ENCODE measurements at regions of chr1 and their contacts with region 1.

Region 1: GRCh38 chr1:40257688-40258444 is at the start of gene ZMPSTE24:
- DNase-seq: peak; percentile 95
- H3K4me3 ChIP-seq: peak within 1 kb of the TSS; percentile 59 to 91 (median 89)
- H3K27ac ChIP-seq: peak within 1 kb of the TSS; percentile 86
- H3K4me1 ChIP-seq: peaks cover 9% of the 10 kb centered on the region
- H3K27me3 ChIP-seq: no peaks in the 10 kb centered on the region
- CTCF ChIP-seq: no peak
- POLR2A ChIP-seq: peak; percentile 88
- total RNA-seq, gene ZMPSTE24: 42.5 and 44.7 TPM in 2 replicates

Region 2: GRCh38 chr1:40040511-40041465 is 217.1 kb before region 1 on chr1 and contains the start of gene CAP1:
- CTCF ChIA-PET with region 1: no interaction called
- POLR2A ChIA-PET with region 1: no interaction called
- dilution Hi-C with region 1: no loop called
- intact Hi-C with region 1: loop called (anchors 5 kb)
- DNase-seq: peak; percentile 97
- H3K4me3 ChIP-seq: peak within 1 kb of the TSS; percentile 76 to 92 (median 90)
- H3K27ac ChIP-seq: peak within 1 kb of the TSS; percentile 83
- H3K4me1 ChIP-seq: peaks cover 39% of the 10 kb centered on the region
- H3K27me3 ChIP-seq: no peaks in the 10 kb centered on the region
- CTCF ChIP-seq: no peak
- POLR2A ChIP-seq: peak; percentile 83
- total RNA-seq, gene CAP1: 415 and 427 TPM in 2 replicates

Region 3: GRCh38 chr1:40078512-40079333 is 179.1 kb before region 1 on chr1:
- CTCF ChIA-PET with region 1: no interaction called
- POLR2A ChIA-PET with region 1: no interaction called
- dilution Hi-C with region 1: no loop called
- intact Hi-C with region 1: loop called (anchors 1 kb)
- DNase-seq: peak; percentile 60
- H3K4me3 ChIP-seq: no peak overlapping the region
- H3K27ac ChIP-seq: no peak overlapping the region
- H3K4me1 ChIP-seq: no peaks in the 10 kb centered on the region
- H3K27me3 ChIP-seq: no peaks in the 10 kb centered on the region
- CTCF ChIP-seq: peak; percentile 63 to 78
- POLR2A ChIP-seq: no peak

Region 4: DNA sequence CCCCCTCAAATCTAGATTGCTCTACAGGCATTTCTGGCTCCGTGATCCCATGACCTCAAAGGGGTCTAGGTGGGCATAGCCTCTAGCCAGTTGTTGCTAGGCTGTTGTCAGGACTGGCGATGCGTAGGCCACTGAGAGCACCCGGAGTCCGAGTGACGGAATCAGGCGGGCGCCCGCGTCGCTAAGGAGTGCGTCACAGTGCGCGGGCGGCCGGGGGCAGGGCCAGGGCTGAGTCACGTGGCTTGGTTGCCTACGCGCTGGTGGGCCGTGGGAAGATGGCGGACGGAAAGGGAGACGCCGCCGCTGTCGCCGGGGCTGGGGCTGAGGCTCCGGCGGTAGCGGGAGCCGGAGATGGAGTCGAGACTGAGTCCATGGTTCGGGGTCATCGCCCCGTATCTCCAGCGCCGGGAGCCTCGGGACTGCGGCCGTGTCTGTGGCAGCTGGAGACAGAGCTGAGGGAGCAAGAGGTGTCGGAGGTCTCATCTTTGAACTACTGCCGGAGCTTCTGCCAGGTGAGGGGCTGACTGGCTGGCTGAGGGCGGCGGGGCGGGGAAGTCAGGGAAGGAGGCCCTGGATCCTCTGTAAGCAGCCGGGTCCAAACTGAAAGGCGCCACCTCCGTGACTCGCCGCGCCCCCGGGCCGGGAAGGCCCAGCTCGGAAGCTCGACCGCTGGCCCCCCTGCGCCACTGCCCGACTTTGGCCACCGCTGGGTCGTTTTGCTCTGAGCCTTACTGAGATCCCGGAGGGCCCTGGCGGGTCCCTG is 96.6 kb before region 1 on chr1 and contains the start of gene RLF:
- CTCF ChIA-PET with region 1: no interaction called
- POLR2A ChIA-PET with region 1: no interaction called
- dilution Hi-C with region 1: no loop called
- intact Hi-C with region 1: loop called (anchors 1 kb)
- DNase-seq: peak; percentile 95
- H3K4me3 ChIP-seq: peak within 1 kb of the TSS; percentile 66 to 93 (median 87)
- H3K27ac ChIP-seq: peak within 1 kb of the TSS; percentile 79
- H3K4me1 ChIP-seq: peaks cover 15% of the 10 kb centered on the region
- H3K27me3 ChIP-seq: peaks cover 5 to 11% of the 10 kb centered on the region in 2 experiments
- CTCF ChIP-seq: no peak
- POLR2A ChIP-seq: peak; percentile 82
- total RNA-seq, gene RLF: 9.0 and 9.4 TPM in 2 replicates

Region 5: DNA sequence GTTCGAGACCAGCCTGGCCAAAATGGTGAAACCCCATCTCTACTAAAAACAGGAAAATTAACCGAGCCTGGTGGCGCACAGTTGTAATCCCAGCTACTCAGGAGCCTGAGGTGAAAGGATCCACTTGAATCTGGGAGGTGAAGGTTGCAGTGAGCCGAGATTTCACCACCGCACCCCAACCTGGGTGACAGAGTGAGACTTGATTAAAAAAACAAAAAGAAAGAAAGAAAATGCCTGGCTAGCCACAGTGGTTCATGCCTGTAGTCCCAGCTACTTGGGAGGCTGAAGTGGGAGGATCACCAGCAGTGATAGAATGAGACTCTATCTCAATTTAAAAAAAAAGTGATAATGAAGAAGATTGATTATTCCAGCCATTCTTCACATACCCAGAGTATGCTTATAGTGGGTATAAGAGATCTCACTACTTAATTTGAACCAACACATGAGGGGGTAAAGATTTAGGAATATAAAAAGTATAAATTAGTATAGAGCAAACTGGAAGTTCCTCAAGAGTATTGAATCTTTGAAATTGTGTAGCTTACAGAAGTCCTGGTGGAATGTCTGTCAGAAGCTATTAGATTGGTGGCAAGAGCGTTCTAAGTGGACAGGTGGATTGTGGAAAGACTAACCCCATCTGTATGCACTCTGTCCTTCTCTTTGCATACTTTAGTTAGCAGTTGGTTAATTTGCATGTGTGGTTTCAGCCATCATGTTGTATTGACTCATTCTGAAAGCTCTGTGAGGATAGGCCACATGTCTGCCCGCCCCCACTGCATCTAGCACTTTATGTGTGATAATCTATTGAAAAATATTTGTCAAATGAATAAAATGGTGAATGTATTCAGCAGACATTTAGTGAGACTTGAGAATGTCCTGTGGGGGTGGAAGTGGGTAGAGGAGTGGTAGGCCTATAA is 71.7 kb before region 1 on chr1:
- CTCF ChIA-PET with region 1: no interaction called
- POLR2A ChIA-PET with region 1: no interaction called
- dilution Hi-C with region 1: no loop called
- intact Hi-C with region 1: no loop called
- DNase-seq: no peak
- H3K4me3 ChIP-seq: no peak overlapping the region
- H3K27ac ChIP-seq: no peak overlapping the region
- H3K4me1 ChIP-seq: peaks cover 4% of the 10 kb centered on the region
- H3K27me3 ChIP-seq: no peaks in the 10 kb centered on the region
- CTCF ChIP-seq: no peak
- POLR2A ChIP-seq: no peak

Region 6: DNA sequence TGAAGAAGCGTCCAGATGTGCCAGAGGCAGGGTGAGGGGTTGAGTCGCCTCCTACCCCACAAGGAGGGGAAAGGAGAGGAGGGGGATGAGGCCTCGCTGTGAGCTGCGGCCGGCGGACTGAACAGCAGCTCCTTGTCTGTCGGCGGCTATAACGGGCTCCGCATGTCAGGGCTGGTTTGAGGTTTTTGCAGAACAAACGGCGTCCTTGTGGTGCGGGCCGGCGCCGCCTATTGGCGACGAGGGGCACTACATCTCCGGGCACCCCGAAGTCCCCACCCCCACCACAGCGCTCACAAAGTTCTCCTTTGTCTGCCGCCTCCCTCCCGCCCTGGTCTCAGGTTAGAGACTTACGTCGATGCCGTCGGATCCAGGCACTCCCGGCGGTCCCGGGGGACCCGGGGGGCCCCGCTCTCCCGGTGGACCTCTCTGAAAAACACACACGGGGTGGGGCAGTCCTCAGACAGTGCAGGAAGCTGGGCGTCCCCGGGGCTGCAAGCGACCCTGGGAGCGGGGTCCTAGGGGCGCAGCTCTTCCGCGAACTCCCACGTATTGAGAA is 57.5 kb after region 1 on chr1:
- CTCF ChIA-PET with region 1: interaction called, 6 read pairs
- POLR2A ChIA-PET with region 1: no interaction called
- dilution Hi-C with region 1: no loop called
- intact Hi-C with region 1: loop called (anchors 1 kb)
- DNase-seq: peak; percentile 86
- H3K4me3 ChIP-seq: peak overlapping the region in 2 of 3 experiments; percentile 18 to 24
- H3K27ac ChIP-seq: no peak overlapping the region
- H3K4me1 ChIP-seq: peaks cover 4% of the 10 kb centered on the region
- H3K27me3 ChIP-seq: peaks cover 23 to 33% of the 10 kb centered on the region in 2 experiments
- CTCF ChIP-seq: peak; percentile 92 to 99
- POLR2A ChIP-seq: no peak